AG04449 (cell line): ENCODE measurements at regions of chr7 and their contacts with region 1.

Region 1: GRCh38 chr7:124152859-124153692 is 120.2 kb upstream of the TMEM229A start:
- DNase-seq: no peak
- H3K4me3 ChIP-seq: no peak overlapping the region
- CTCF ChIP-seq: peak; percentile 0

Region 2: DNA sequence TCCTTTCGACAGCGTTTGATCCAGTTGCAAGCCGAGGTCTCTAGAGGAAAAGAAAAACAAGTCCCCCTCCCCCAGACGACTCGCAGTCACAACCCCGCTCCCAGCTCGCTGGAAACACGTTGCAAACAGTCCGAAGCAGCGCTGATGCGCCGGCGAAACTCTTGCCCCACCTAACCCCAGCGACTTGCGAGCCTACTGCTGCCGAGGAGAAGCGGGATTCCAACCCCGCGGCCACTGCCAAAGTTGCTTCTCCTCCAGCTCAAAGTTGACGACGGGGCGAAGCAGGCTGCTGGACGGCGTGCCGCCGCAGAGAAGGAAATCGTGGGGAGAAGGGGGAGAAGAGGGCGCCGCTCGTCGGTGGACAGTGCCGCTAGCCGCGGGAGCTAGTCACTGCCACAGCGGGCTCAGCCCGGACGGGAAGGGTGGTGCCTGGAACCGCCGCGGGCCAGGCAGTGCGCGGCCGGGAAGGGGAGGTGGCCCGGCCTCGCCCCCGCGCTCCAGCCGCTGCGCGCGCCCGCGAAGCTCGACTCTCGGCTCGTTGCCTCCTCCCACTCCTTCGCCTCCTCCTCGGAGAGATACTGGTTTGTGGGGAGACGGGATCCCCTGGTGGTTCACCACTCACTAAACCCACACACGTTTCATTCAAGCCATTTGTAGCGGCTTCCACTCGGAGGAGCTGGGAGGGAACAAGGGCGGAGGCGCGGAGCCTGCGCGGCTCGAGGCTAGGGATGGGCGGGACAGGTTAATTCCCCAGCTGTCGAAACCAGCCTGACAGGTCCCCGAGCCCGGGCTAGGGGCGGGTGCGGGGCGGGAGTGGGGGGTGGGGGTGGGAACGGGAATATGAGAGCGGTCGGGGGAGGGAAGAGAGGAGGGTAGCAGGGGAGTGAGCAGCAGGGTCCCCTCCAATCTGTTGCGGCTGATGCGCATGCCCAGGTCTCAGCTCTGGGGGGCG is 612.6 kb after region 1 on chr7 and contains the start of gene GPR37:
- CTCF ChIA-PET with region 1: interaction called, 13 read pairs
- POLR2A ChIA-PET with region 1: no interaction called
- DNase-seq: no peak
- H3K4me3 ChIP-seq: peak within 1 kb of the TSS; percentile 46
- CTCF ChIP-seq: peak; percentile 11

Region 3: DNA sequence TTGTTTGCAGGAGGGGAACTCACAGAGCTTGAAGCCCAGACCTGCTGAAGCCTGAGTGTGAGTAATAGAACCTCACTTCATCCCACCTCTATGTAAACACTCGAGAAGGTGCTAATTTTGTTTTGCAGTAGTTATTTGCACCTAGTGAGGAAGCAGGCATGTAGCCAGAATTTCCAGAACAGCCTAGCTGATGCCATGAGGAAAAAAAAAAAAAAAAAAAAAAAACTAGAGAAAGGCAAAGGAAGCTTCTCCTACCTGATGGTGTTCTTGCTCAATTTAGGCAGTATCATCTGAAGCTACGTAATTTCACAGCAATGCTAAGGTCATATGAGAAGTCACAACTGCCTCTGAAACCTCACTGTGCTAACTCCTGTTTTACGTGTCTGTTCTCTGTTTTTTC is 626.1 kb after region 1 on chr7:
- CTCF ChIA-PET with region 1: interaction called, 57 read pairs
- POLR2A ChIA-PET with region 1: no interaction called
- DNase-seq: no peak
- H3K4me3 ChIP-seq: no peak overlapping the region
- CTCF ChIP-seq: no peak

Region 4: GRCh38 chr7:124784879-124785818 is 632.1 kb after region 1 on chr7:
- CTCF ChIA-PET with region 1: interaction called, 57 read pairs
- POLR2A ChIA-PET with region 1: no interaction called
- DNase-seq: peak; percentile 12
- H3K4me3 ChIP-seq: no peak overlapping the region
- CTCF ChIP-seq: peak; percentile 80